Heart right ventricle (tissue), 16 donors: ENCODE measurements at regions of chr2 and their contacts with region 1.

Region 1: GRCh38 chr2:25276569-25277465 is 64.9 kb downstream of the DNMT3A start:
- DNase-seq: peak; percentile 64 to 82
- ATAC-seq: peak; percentile 38 to 73 (median 52)
- H3K4me3 ChIP-seq: peak overlapping the region in 9 of 10 donors; percentile 18 to 56 (median 46)
- H3K27ac ChIP-seq: peak overlapping the region; percentile 14 to 94 (median 82)
- H3K4me1 ChIP-seq: peaks cover 6 to 81% (median 71%) of the 10 kb centered on the region in 9 donors
- H3K27me3 ChIP-seq: no peaks in the 10 kb centered on the region
- CTCF ChIP-seq: peak; percentile 71 to 93 (median 86)

Region 2: DNA sequence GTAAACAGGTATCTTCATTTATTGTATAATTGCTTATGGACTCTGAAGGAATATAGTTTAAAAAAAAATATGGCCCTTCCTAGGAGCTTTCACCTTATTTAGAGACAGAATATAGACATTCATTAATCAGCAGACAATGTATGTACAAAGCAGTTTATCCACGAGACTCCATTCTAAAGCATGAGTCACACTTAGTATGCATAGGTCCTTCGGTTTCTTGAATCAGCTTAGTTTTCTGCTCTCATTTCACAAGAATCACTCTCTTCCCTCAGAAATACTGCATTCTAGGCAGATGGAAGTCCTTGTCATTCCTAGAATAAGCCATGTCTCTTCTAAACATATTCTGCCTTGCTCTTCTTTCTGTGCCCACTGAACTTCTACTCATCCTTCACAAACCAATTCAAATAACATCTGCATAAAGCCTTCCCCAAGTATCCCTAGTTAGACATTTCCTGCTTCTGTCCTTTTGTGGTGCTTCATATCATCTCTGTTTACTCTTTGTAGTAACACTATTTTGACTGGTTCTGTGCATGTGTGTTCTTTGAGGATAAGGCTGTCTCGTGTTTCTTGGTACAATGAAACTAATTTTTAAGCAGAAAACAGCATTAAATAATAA is 568.2 kb before region 1 on chr2:
- intact Hi-C with region 1: no loop called
- DNase-seq: no peak
- ATAC-seq: no peak
- H3K4me3 ChIP-seq: no peak overlapping the region
- H3K27ac ChIP-seq: no peak overlapping the region
- H3K4me1 ChIP-seq: peaks cover 0 to 31% (median 0%) of the 10 kb centered on the region in 9 donors
- H3K27me3 ChIP-seq: no peaks in the 10 kb centered on the region
- CTCF ChIP-seq: no peak

Region 3: GRCh38 chr2:24907116-24907515 is 369.7 kb before region 1 on chr2:
- intact Hi-C with region 1: no loop called
- DNase-seq: no peak
- ATAC-seq: peak in 2 of 8 donors; percentile 11 to 35
- H3K4me3 ChIP-seq: no peak overlapping the region
- H3K27ac ChIP-seq: no peak overlapping the region
- H3K4me1 ChIP-seq: peaks cover 0 to 3% (median 0%) of the 10 kb centered on the region in 9 donors
- H3K27me3 ChIP-seq: no peaks in the 10 kb centered on the region
- CTCF ChIP-seq: no peak

Region 4: DNA sequence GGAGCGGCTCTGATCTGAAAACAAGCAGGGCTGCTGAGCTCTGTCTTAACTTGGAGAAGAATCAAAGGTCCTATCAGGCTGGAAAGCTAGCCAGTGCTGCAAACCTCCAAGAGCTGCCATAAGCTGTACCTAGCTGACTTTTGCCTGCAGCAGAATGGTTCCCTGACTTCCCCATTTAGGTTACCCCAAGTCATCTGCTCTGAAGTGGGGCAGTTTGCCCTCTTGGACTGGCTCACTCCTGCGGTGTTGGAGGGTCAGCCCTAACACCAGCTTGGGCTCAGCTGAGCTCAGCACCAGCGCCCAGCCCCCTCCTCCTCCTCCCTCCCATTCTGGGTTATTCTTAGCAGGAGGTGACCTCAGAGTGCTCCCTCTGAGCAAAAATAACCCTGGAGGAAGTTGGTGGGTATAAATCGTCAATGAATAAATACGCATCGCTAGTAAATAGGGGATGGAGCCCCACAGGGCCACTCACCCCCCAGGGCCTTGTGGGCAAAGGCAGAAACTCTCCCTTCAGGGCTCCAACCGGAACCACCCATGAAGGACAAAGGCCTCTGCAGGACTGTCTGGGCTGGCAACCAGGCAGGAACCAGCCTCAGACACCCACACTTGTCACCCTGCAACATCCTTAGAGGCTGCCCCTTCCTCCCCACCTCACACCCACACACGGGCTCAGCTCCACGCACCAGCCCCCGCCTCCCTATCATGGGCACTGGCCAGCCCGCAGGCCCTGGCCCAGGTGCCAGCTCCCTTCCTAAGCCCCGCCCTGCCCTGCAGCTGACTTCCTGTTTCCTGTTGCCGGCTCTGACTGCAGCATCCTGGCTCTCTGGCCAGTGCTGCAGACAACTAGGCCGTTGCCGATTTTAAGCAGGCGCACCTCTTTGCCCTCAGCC is 18.0 kb after region 1 on chr2:
- intact Hi-C with region 1: loop called in 1 of 10 experiments (anchors 2 kb)
- DNase-seq: peak; percentile 85 to 88
- ATAC-seq: peak; percentile 87 to 96 (median 92)
- H3K4me3 ChIP-seq: peak overlapping the region in 9 of 10 donors; percentile 2 to 42 (median 39)
- H3K27ac ChIP-seq: peak overlapping the region; percentile 94 to 98 (median 96)
- H3K4me1 ChIP-seq: peaks cover 31 to 66% (median 58%) of the 10 kb centered on the region in 9 donors
- H3K27me3 ChIP-seq: no peaks in the 10 kb centered on the region
- CTCF ChIP-seq: peak in 1 of 9 donors; percentile 7